ENCODE measurements at regions of chr20 and their contacts with region 1.

Region 1: DNA sequence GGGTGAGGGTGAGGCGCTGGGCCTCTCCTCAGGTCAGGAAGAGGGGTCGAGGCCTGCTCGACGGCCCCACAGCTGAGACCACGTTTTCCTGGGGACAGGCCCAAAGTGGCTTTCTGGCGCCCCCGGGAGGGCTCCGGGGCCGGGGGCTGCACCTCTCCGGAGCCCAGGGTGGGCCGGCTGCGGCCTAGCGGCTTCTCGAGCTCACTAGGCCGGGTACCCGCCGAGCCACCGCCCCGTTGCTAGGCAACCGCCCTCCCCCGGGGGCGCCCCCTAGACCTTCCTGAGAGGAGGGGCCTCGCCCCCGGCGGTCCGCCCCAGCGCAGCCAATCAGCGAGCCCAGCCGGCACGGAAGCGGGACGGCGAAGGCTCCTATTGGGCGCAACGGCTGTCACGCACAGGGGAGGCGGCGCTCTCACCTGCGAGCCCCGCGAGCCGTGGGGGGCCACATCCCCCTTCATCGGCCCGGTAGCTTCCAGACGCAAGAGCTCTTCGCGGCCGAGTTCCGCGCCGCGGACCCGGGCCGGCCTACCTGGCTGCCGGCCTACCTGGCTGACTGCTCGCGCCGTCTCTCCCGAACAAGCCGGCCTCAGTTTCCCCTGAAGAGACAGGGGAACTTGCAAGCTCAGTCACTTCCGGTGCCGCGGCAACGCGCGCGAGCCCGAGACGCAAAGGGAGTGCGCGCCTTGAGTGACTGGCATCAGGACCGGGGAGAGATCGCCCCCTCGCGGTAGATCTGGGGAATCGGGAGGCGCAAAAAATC is 831 bp upstream of the BCL2L1 start:
- DNase-seq: peak; percentile 92 to 99
- ATAC-seq: peak; percentile 84 to 88
- H3K4me3 ChIP-seq: peak overlapping the region; percentile 68
- H3K27ac ChIP-seq: peak overlapping the region; percentile 95 to 96
- H3K4me1 ChIP-seq: peaks cover 10% of the 10 kb centered on the region
- CTCF ChIP-seq: peak; percentile 95
- EP300 ChIP-seq: 0 out of 5 replicates have a peak, but pooled peaks of 1 of the 2 experiments have one; percentile 15
- POLR2A ChIP-seq: peak; percentile 20; the same call in 1 of the 2 replicates
- RAD21 ChIP-seq: peak; percentile 97 to 98

Region 2: DNA sequence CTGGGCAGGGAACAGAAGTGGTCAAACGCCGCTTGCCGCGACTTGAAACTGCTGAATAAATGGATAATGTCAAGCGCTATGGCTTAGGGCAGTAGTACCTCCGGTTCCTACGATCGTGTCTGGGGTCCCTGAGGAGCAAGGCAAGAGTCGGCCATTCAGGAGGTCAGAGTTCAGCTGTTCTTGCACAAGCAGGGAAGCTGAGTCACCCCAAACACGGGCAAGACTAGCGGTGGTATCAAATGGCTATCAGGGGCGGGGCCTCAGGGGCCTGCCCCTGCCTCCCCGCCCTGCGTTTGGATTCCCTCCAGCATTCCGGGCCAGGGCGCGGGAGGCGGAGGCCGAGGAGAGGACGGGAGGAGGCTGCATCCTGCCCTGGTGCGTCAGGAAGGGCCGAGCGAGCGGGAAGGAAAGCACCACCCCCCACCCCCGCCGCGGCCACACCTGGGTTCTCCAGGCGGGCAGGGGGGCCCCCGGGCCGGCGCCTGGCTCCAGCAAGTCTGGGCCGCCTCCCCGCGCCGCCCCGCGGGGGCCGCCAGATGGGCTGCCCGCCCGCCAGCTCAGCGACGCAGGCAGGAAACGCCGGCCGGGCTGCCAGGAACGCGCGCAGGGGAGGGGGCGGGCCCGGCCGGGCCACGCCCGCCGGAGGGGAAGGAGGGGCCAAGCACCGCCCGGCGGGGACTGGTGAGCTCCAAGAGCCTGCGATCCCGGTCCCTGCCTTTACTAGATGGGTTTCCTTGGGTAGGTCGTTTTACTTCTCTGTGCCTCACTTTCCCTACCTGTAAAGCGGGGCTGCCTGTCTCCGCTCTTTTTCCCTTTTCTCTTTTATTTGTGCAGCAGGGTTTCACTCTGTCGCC is 150.6 kb before region 1 on chr20:
- CTCF ChIA-PET with region 1: interaction called, 21 read pairs
- POLR2A ChIA-PET with region 1: interaction called, 4 read pairs
- DNase-seq: peak; percentile 83 to 99
- ATAC-seq: peak; percentile 79
- H3K4me3 ChIP-seq: peak overlapping the region; percentile 62
- H3K27ac ChIP-seq: peak overlapping the region; percentile 93 to 99
- H3K4me1 ChIP-seq: peaks cover 53% of the 10 kb centered on the region
- CTCF ChIP-seq: no peak
- EP300 ChIP-seq: peak; percentile 92 to 98
- POLR2A ChIP-seq: peak; percentile 52
- RAD21 ChIP-seq: peak in 1 of 2 experiments; percentile 44; a peak in 3 of 5 replicates

Region 3: GRCh38 chr20:31637660-31638059 is 85.8 kb before region 1 on chr20 and contains the start of gene COX4I2:
- CTCF ChIA-PET with region 1: interaction called, 197 read pairs
- POLR2A ChIA-PET with region 1: interaction called, 18 read pairs
- DNase-seq: no peak
- ATAC-seq: no peak
- H3K4me3 ChIP-seq: no peak within 1 kb of the TSS
- H3K27ac ChIP-seq: 0 out of 6 replicates have a peak within 1 kb of the TSS, but pooled peaks of 1 of the 2 experiments have one; percentile 21
- H3K4me1 ChIP-seq: no peaks in the 10 kb centered on the region
- CTCF ChIP-seq: no peak
- EP300 ChIP-seq: no peak
- POLR2A ChIP-seq: no peak
- RAD21 ChIP-seq: no peak
- polyA plus RNA-seq, gene COX4I2: not detected in 2 replicates

Region 4: GRCh38 chr20:31674895-31675827 is 48.3 kb before region 1 on chr20:
- CTCF ChIA-PET with region 1: interaction called, 88 read pairs
- POLR2A ChIA-PET with region 1: interaction called, 15 read pairs
- DNase-seq: no peak
- ATAC-seq: peak in 1 of 2 experiments; percentile 10; a peak in 1 of 6 replicates
- H3K4me3 ChIP-seq: no peak overlapping the region
- H3K27ac ChIP-seq: peak overlapping the region; percentile 25 to 75; a peak in 5 of 6 replicates
- H3K4me1 ChIP-seq: peaks cover 97% of the 10 kb centered on the region
- CTCF ChIP-seq: no peak
- EP300 ChIP-seq: no peak
- POLR2A ChIP-seq: no peak
- RAD21 ChIP-seq: no peak

Region 5: GRCh38 chr20:31704225-31705119 is 19.0 kb before region 1 on chr20:
- CTCF ChIA-PET with region 1: interaction called, 167 read pairs
- POLR2A ChIA-PET with region 1: interaction called, 30 read pairs
- DNase-seq: peak; percentile 75 to 96
- ATAC-seq: peak; percentile 81 to 88
- H3K4me3 ChIP-seq: peak overlapping the region; percentile 11; the same call in 1 of the 3 replicates
- H3K27ac ChIP-seq: peak overlapping the region; percentile 89 to 95
- H3K4me1 ChIP-seq: peaks cover 97% of the 10 kb centered on the region
- CTCF ChIP-seq: no peak
- EP300 ChIP-seq: peak; percentile 99
- POLR2A ChIP-seq: no peak
- RAD21 ChIP-seq: peak; percentile 16 to 36; a peak in 2 of 5 replicates

Region 6: DNA sequence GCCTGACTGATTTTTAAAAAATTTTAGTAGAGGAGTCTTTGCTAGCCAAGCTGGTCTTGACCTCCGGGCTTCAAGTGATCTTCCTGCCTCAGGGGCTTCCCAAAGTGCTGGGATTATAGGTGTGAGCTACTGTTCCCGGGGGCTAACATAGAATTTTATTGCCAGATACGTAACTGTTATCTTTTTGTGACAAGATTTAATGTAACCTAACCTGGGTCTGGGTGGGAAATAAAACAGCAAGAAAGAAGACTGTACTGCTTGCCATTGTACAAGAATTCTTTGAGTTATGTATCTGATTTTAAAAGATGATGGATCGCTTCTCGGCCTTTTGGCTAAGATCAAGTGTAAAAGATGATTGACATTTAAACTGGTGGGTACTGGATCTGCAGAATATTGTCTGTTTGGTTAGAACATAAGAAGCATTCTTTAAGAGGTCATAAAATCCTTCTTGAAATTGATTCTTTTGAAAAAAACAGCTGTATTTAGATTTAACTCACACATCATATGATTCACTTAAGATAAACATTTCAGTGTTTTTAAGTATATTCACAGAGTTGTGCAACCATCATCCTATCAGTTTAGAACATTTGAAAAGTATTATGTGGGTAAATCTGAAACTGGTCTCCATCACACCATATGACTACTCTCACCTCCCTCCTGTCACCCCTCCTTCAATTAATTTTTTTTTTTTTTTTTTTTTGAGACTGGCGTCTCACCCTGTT is 37.2 kb after region 1 on chr20:
- CTCF ChIA-PET with region 1: interaction called, 14 read pairs
- POLR2A ChIA-PET with region 1: no interaction called
- DNase-seq: no peak
- ATAC-seq: no peak
- H3K4me3 ChIP-seq: no peak overlapping the region
- H3K27ac ChIP-seq: 0 out of 6 replicates have a peak overlapping the region, but pooled peaks of 1 of the 2 experiments have one; percentile 2
- H3K4me1 ChIP-seq: peaks cover 6% of the 10 kb centered on the region; the same call in 1 of the 3 replicates
- CTCF ChIP-seq: no peak
- EP300 ChIP-seq: no peak
- POLR2A ChIP-seq: no peak
- RAD21 ChIP-seq: no peak

Region 7: DNA sequence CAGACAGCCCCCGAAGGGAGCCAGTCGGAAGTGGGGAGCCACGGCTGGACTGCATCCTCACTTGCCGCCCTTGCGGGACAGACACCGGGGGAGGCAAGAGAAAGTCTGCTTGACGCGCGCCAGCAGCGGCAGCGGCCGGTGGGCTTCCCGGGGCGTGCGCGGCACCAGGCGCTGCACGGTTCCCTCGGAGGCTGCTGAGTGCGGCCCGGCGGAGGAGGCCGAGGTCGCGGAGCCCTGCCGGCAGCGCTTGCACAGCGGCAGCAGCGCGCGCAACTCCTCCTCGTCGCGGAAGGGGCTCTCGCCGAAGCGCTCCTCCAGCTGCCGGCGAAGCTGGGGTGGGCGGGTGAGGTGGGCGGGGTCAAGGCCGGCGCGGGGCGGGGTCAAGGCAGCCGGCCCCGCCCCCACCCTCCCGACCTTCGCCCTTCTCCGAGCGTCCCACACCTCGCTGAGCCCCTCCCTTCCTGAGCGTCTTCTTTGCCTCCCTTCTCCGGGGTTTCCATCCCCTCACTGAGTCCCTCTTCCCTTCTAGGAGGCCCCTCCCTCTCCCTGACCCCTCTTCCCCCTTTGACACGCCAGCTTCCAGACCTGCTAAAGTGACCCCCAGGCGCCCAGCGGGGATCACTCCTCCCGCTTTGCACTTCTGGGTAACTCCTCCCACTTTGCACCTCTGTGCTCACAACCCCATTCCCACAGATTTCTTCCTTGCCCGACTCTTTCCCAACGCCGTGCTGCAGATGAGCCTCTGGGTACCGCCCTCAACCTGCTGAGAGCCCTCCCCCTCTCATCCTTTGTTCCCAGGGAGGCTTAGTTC is 138.1 kb after region 1 on chr20:
- CTCF ChIA-PET with region 1: no interaction called
- POLR2A ChIA-PET with region 1: no interaction called
- DNase-seq: peak; percentile 75 to 85
- ATAC-seq: peak; percentile 72 to 88
- H3K4me3 ChIP-seq: peak overlapping the region; percentile 57
- H3K27ac ChIP-seq: peak overlapping the region; percentile 28 to 82; a peak in 5 of 6 replicates
- H3K4me1 ChIP-seq: peaks cover 15% of the 10 kb centered on the region
- CTCF ChIP-seq: no peak
- EP300 ChIP-seq: no peak
- POLR2A ChIP-seq: peak; percentile 50
- RAD21 ChIP-seq: no peak

Region 8: DNA sequence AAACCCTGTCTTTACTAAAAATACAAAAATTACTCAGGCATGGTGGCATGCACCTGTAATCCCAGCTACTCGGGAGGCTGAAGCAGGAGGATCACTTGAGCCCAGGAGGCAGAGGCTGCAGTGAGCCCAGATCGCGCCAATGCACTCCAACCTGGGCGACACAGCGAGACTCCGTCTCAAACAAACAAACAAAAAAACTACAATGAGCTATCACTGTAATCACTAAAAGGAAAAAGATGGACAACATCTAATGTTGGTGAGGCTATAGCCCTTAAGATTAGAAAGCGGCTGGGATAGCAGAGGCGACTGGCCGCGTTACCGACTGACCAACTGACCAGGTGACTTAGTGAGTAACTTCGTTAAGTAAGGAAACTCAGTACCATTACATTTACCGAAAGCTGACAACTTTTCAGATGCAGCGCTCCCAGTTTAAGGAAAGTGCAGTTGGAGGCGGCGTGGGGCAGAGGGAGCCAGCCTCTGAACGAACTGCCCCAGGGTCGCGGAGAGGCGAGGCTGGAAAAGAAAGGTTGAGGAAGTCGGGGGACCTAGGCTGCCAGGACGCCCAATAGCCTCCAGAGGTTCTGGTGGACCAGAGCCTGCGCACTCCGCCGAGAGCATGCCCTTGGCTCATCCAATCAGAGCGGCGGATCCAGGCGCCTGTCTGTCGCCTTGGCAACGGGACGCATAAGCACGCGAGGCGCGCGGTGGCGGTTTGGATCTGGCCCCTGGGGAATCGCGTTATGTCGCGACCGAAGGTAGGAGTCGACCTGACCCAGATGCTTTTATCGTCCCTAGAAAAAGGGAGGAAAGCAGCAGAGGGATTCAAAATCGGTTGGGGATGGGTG is 155.9 kb after region 1 on chr20:
- CTCF ChIA-PET with region 1: no interaction called
- POLR2A ChIA-PET with region 1: no interaction called
- DNase-seq: peak; percentile 98
- ATAC-seq: peak; percentile 100
- H3K4me3 ChIP-seq: peak overlapping the region; percentile 61
- H3K27ac ChIP-seq: peak overlapping the region; percentile 70 to 85
- H3K4me1 ChIP-seq: no peaks in the 10 kb centered on the region
- CTCF ChIP-seq: no peak
- EP300 ChIP-seq: no peak
- POLR2A ChIP-seq: peak; percentile 88
- RAD21 ChIP-seq: no peak

Region 9: GRCh38 chr20:31894980-31895675 is 171.6 kb after region 1 on chr20:
- CTCF ChIA-PET with region 1: no interaction called
- POLR2A ChIA-PET with region 1: no interaction called
- DNase-seq: peak in 1 of 2 experiments; percentile 58
- ATAC-seq: peak; percentile 82 to 96
- H3K4me3 ChIP-seq: no peak overlapping the region
- H3K27ac ChIP-seq: no peak overlapping the region
- H3K4me1 ChIP-seq: no peaks in the 10 kb centered on the region
- CTCF ChIP-seq: no peak
- EP300 ChIP-seq: no peak
- POLR2A ChIP-seq: no peak
- RAD21 ChIP-seq: no peak

Region 10: DNA sequence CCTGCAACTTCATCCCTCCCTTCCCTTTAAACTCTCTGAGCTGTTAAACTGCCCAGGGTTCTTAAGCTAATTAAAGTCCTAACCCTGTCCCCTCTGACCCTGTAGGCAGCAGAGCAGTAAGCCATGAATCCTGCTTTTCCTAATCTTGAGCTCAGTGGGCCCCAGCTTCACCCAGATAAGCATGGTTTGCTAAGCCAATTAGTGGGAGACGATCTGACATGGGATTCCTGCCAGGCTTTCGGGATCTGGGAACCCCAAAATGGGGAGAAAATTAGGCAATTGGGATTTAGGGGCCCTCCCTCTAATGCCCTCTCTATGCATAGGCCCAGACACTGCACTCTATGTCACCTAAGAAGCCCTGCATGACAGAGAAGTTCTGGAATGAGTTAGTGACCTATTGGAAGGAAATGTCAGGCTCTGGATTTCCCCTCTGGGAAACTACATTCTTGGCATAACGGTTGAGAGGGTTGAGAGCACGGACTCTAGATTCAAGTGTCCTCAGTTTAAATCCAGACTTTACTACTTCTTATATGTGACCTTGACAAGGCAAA is 249.0 kb after region 1 on chr20:
- CTCF ChIA-PET with region 1: no interaction called
- POLR2A ChIA-PET with region 1: no interaction called
- DNase-seq: peak in 1 of 2 experiments; percentile 25
- ATAC-seq: peak in 1 of 2 experiments; percentile 56; a peak in 3 of 6 replicates
- H3K4me3 ChIP-seq: no peak overlapping the region
- H3K27ac ChIP-seq: no peak overlapping the region
- H3K4me1 ChIP-seq: peaks cover 6% of the 10 kb centered on the region; the same call in 2 of the 3 replicates
- CTCF ChIP-seq: no peak
- EP300 ChIP-seq: no peak
- POLR2A ChIP-seq: no peak
- RAD21 ChIP-seq: no peak